Activated CD8-positive, alpha-beta memory T cell treated with anti-CD3 and anti-CD28 coated beads, Interleukin-2, amount 10 ng/mL, durations not matched to agents 7 days and 5 days (primary cell): ENCODE measurements at regions of chr7 and their contacts with region 1.

Region 1: GRCh38 chr7:32905175-32905662 is 13.7 kb upstream of the KBTBD2 start:
- DNase-seq: peak; percentile 95
- ATAC-seq: peak; percentile 94
- H3K4me3 Mint-ChIP-seq: peak overlapping the region; percentile 75
- H3K27ac Mint-ChIP-seq: peak overlapping the region; percentile 96
- H3K4me1 Mint-ChIP-seq: peaks cover 18% of the 10 kb centered on the region
- H3K27me3 Mint-ChIP-seq: no peaks in the 10 kb centered on the region

Region 2: DNA sequence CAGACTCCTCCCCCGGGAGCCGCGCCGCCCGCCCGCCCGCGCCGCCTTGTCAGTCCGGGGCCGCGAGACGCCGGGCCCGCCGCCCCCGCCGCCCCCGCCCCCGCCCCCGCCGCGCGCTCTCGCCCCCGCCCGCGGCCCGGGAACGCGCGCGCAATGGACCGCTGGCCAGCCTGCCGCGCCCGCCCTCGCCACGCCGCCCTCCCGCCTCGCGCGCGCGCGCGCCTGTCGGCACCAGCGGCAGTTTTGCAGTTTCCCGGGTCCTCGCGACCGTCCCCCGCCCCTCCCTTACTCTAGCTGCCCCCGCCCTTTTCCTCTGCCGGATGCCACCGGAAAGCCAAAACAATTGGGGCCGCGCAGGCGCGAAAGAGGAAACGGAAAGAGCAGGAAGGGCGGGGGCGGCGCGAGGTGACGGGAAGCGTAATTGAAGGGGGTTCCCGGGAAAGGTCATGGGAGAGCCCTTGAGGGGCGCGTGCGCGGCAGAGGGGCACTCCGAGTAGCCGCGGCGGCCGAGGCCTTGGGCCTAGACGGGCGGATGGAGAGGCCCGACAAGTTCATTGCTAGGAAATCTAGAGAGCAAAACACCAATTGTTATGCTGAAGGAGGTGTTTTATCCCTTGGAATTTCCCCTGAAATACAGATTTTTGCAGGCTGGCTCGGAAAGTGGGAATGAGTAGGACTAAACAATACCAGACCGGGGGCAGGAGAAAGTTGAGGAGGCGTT is 13.3 kb before region 1 on chr7:
- CTCF ChIA-PET with region 1: interaction called, 31 read pairs
- DNase-seq: peak; percentile 98
- ATAC-seq: peak; percentile 66
- H3K4me3 Mint-ChIP-seq: peak overlapping the region; percentile 78
- H3K27ac Mint-ChIP-seq: peak overlapping the region; percentile 92
- H3K4me1 Mint-ChIP-seq: peaks cover 46% of the 10 kb centered on the region
- H3K27me3 Mint-ChIP-seq: no peaks in the 10 kb centered on the region